GM12878 (cell line): ENCODE measurements at regions of chr16 and their contacts with region 1.

Region 1: DNA sequence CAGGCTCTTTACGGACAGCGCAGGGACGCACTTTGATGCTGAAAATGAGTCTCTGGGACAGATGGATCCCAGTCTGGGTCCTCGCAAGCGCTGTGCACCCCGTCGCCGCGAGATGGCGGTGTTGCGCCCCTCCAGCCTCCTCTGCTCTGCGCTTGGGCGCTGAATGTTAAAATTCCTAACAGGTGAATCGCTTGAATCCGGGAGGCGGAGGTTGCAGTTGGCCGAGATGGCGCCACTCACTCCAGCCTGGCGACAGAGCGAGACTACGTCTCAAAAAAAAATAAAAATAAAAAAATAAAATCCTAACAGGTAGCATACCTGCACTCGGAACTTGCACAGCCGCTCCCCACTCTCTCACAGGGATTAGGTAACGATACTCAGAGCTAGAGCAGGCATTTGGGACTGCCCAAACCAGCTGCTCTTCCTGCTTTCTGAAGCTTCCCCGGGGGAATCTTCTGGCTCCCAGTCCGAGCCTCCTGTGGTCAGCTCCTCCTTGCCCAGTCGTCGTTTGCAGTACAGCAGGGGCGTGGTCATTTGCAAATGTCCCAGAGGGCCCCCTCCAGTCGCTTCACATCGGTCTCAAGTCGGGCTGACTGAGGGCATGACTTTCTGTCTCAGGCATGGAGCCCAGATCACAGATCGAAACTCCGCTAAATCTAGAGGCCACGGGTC is 26.2 kb upstream of the OSGIN1 start:
- DNase-seq: no peak
- ATAC-seq: peak; percentile 91
- H3K4me3 ChIP-seq: no peak overlapping the region
- H3K27ac ChIP-seq: no peak overlapping the region
- H3K4me1 ChIP-seq: no peaks in the 10 kb centered on the region
- H3K27me3 ChIP-seq: no peaks in the 10 kb centered on the region
- CTCF ChIP-seq: peak; percentile 75 to 94 (median 81)
- EP300 ChIP-seq: no peak
- POLR2A ChIP-seq: no peak
- RAD21 ChIP-seq: peak; percentile 43

Region 2: GRCh38 chr16:83826146-83826913 is 100.5 kb before region 1 on chr16:
- CTCF ChIA-PET with region 1: interaction called, 5 read pairs
- POLR2A ChIA-PET with region 1: no interaction called
- RAD21 ChIA-PET with region 1: interaction called, 3 read pairs
- SMC1A ChIA-PET with region 1: interaction called, 4 read pairs
- in situ Hi-C with region 1: no loop called
- intact Hi-C with region 1: loop called (anchors 10 kb)
- DNase-seq: no peak
- ATAC-seq: peak; percentile 99
- H3K4me3 ChIP-seq: no peak overlapping the region
- H3K27ac ChIP-seq: no peak overlapping the region
- H3K4me1 ChIP-seq: no peaks in the 10 kb centered on the region
- H3K27me3 ChIP-seq: no peaks in the 10 kb centered on the region
- CTCF ChIP-seq: peak; percentile 91 to 93 (median 93)
- EP300 ChIP-seq: no peak
- POLR2A ChIP-seq: no peak
- RAD21 ChIP-seq: peak; percentile 85

Region 3: DNA sequence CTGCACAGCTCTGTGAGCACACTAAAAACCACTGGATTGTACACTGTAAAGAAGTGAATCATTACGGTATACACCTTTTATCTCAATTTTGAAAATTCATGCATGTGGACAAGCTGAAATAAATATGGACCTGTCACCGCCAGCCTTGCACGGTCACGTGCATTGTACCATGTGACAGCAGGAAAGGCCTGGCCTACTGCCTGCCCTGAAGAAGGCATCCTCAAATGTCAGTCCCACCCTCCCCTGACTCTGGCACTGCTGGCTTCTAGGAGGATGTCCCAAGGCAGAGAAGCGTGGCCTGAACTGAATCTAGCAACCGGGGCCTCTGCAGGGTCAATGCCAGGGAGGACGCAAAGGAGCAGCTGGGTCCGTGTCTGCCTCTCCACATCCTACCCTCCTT is 81.1 kb after region 1 on chr16:
- CTCF ChIA-PET with region 1: no interaction called
- POLR2A ChIA-PET with region 1: no interaction called
- RAD21 ChIA-PET with region 1: no interaction called
- SMC1A ChIA-PET with region 1: no interaction called
- in situ Hi-C with region 1: no loop called
- intact Hi-C with region 1: no loop called
- DNase-seq: no peak
- ATAC-seq: no peak
- H3K4me3 ChIP-seq: no peak overlapping the region
- H3K27ac ChIP-seq: no peak overlapping the region
- H3K4me1 ChIP-seq: no peaks in the 10 kb centered on the region
- H3K27me3 ChIP-seq: no peaks in the 10 kb centered on the region; a peak in 2 of 4 replicates
- CTCF ChIP-seq: no peak
- EP300 ChIP-seq: no peak
- POLR2A ChIP-seq: no peak
- RAD21 ChIP-seq: no peak